ENCODE measurements at regions of chr4 and their contacts with region 1.

Region 1: GRCh38 chr4:121307445-121308327 is 73.1 kb downstream of the QRFPR start:
- DNase-seq: peak; percentile 31
- H3K4me3 Mint-ChIP-seq: no peak overlapping the region
- H3K27ac Mint-ChIP-seq: no peak overlapping the region
- H3K4me1 Mint-ChIP-seq: peaks cover 24% of the 10 kb centered on the region
- H3K27me3 Mint-ChIP-seq: peaks cover 20% of the 10 kb centered on the region

Region 2: DNA sequence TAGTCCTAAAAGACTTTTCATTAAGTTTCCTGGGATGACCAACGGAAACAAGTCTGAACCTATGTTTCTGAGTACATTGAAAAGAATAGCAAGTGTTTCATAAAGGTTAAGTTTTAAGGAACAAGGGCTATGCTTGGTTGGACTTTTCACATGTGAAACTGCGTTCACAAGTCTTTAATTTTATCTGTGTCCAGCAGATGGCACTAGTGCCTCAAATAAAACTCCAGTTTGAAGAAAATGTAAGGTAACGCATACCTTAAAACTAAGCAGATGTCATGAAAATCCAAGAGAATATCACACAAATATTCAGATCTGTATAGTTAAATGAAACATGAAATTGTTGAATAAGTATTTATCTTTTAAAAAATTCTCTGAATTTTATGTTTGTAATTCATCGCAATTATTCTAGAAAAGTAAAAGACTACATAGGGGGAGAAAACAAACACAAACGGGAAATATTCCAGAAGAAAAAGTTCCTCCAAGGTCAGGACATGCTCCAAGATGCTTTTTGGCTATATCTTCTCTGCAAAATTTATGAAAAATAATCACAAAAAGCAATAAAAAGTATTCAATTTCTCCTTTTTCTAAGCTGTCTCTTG is 1151.5 kb before region 1 on chr4:
- intact Hi-C with region 1: loop called (anchors 10 kb)
- DNase-seq: no peak
- H3K4me3 Mint-ChIP-seq: no peak overlapping the region
- H3K27ac Mint-ChIP-seq: no peak overlapping the region
- H3K4me1 Mint-ChIP-seq: no peaks in the 10 kb centered on the region
- H3K27me3 Mint-ChIP-seq: peaks cover 7% of the 10 kb centered on the region

Region 3: DNA sequence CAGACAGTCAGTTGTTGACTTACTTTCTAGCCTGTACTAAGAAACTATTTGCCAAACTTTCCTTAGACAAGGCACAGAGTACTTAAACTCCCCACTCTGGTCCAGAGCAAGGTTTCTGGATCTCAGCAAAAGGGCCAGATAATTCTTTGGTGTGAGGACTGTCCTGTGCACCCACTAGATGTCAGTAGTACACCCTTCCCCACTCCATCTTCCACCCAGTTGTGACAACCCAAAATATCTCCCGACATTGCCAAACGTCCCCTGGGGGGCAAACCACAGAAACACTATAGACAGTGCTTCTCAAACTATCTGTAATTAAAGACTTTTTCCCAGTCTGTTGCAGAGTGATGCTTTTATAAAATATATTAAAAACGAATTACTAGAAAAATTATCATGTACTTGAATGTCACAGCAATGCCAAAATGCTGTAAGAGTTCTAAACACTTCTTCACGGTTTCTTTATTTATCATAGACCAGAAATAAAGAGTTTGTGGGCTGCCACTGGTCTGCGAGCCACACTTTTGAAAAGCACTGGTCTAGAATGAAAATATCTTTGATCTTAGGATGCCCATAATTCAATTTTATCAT is 588.6 kb before region 1 on chr4:
- intact Hi-C with region 1: loop called (anchors 5 kb)
- DNase-seq: no peak
- H3K4me3 Mint-ChIP-seq: no peak overlapping the region
- H3K27ac Mint-ChIP-seq: no peak overlapping the region
- H3K4me1 Mint-ChIP-seq: no peaks in the 10 kb centered on the region
- H3K27me3 Mint-ChIP-seq: peaks cover 14% of the 10 kb centered on the region

Region 4: DNA sequence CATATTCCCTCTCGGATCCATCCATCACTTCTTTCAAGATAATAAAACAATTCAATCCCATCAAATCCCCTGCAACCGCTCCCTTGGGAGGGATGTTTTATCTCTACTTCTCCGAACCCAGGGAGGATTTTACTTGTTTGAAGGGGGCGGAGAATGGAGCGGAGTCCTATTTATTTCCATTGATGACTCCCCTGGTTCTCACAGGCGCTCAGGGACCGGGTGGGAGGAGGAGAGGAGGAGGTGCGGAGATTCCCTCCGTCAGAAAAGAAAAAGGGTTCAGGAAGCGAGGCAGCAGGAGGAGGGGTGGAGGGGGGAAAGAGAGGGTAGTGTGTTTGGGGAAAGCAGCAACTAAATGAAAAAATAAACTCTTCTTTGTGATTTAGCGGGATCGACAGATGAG is 237.4 kb before region 1 on chr4:
- intact Hi-C with region 1: no loop called
- DNase-seq: no peak
- H3K4me3 Mint-ChIP-seq: peak overlapping the region; percentile 78
- H3K27ac Mint-ChIP-seq: no peak overlapping the region
- H3K4me1 Mint-ChIP-seq: peaks cover 18% of the 10 kb centered on the region
- H3K27me3 Mint-ChIP-seq: peaks cover 75% of the 10 kb centered on the region

Region 5: DNA sequence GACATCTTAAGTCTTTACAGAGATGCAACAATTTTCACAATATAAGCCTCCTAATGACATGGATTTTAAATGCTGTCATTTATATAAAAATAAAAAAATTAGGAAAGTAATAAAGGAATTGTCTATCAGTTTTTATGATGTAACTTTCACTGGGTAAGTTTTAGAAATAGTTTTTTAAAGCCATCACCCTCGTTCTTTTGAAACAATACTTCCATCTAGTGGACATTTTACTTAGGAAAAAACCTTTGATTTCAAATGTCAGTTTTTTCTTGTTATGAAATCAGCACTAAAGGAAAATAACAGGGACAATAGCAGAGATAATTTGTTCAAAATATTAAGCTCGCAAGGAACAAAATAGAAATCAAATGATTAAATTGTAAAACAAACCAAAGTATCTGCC is 211.1 kb before region 1 on chr4:
- intact Hi-C with region 1: loop called (anchors 5 kb)
- DNase-seq: no peak
- H3K4me3 Mint-ChIP-seq: no peak overlapping the region
- H3K27ac Mint-ChIP-seq: no peak overlapping the region
- H3K4me1 Mint-ChIP-seq: no peaks in the 10 kb centered on the region
- H3K27me3 Mint-ChIP-seq: peaks cover 31% of the 10 kb centered on the region

Region 6: DNA sequence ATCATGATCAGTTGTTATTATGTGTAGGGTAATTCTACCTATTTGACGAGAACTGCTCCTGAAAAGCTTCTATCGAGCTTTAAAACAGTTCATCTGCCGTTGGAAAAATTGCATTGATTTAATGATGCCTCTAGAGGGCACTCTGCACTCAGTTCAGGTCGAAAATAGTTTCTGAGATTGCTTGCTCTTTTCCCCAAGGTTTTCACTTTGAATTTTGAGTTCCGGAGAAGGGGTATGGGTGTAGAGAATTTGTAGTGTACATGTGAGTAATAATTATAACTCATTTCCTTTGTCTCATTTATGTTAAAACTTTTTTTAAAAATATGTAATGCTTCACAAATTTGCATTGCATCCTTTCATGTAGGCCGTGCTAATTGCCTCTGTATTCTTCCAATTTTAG is 115.2 kb before region 1 on chr4:
- intact Hi-C with region 1: loop called (anchors 1 kb)
- DNase-seq: no peak
- H3K4me3 Mint-ChIP-seq: peak overlapping the region; percentile 55
- H3K27ac Mint-ChIP-seq: no peak overlapping the region
- H3K4me1 Mint-ChIP-seq: peaks cover 52% of the 10 kb centered on the region
- H3K27me3 Mint-ChIP-seq: no peaks in the 10 kb centered on the region

Measured in activated T-helper 2 cell treated with anti-CD3 and anti-CD28 coated beads, Interferon-gamma antibody, Interleukin-2, Interleukin-4, amounts not matched to agents 10 μg/mL and 5 μg/mL and 100 μg/mL, durations not matched to agents 14 hours and 24 hours and 36 hours (primary cell).